GM13977 (cell line): ENCODE measurements at regions of chr6 and their contacts with region 1.

Region 1: DNA sequence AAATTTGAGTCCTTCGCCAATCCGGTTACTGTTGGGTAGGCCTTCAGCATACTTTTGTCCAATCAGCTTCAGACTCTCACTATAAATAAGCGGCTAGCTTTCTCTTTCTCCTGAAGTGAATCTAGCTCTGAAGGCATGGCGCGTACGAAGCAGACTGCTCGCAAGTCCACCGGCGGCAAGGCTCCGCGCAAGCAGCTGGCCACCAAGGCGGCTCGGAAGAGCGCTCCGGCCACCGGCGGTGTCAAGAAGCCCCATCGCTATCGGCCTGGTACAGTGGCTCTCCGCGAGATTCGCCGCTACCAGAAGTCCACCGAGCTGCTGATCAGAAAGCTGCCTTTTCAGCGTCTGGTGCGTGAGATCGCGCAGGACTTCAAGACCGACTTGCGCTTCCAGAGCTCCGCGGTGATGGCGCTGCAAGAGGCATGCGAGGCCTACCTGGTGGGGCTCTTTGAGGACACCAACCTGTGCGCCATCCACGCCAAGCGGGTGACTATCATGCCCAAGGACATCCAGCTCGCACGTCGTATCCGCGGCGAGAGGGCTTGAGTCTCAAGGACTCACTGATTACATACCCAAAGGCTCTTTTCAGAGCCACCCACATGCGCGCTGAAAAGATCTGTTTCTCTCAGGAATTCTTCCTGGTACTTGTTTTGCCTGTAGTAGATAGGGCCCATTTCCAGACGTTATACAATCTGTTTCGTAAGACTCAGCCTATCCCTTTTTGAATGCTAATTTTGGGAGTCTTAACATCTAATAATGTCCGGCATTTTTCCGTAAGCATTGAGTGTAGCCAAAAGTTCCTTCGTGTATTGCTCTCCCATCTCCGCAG is 102.0 kb downstream of the OR2B2 start:
- DNase-seq: peak; percentile 79
- CTCF ChIP-seq: peak; percentile 34

Region 2: GRCh38 chr6:26249957-26250697 is 1560.0 kb before region 1 on chr6:
- in situ Hi-C with region 1: loop called (anchors 25 kb)
- DNase-seq: peak; percentile 55
- CTCF ChIP-seq: peak; percentile 61

Region 3: DNA sequence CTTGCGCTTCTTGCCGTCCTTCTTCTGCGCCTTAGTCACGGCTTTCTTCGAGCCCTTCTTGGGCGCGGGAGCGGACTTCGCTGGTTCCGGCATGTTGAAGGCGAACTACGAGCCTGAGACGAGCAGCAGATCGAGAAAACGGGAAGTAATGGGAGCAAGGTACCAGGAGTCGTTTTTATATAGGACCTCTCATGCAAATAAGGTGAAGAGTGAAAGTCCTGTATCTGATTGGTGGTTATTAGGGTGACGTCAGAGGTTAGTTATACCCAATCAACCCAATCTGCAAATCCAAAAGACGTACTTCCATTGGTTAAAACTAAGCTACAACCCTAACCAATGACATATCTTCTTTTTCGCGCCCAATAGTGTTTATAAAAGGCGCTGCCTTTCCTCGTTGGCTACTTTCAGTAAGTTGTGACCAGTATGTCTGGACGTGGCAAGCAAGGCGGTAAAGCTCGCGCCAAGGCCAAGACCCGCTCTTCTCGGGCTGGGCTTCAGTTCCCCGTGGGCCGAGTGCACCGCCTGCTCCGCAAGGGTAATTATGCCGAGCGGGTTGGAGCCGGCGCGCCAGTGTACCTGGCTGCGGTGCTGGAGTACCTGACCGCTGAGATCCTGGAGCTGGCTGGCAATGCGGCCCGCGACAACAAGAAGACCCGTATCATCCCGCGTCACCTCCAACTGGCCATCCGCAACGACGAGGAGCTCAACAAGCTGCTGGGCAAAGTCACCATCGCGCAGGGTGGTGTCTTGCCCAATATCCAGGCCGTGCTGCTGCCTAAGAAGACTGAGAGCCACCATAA is 663.2 kb before region 1 on chr6:
- in situ Hi-C with region 1: loop called (anchors 5 kb)
- DNase-seq: peak; percentile 93
- CTCF ChIP-seq: no peak

Region 4: GRCh38 chr6:27687154-27688013 is 122.8 kb before region 1 on chr6:
- in situ Hi-C with region 1: no loop called
- DNase-seq: peak; percentile 80
- CTCF ChIP-seq: peak; percentile 95

Region 5: DNA sequence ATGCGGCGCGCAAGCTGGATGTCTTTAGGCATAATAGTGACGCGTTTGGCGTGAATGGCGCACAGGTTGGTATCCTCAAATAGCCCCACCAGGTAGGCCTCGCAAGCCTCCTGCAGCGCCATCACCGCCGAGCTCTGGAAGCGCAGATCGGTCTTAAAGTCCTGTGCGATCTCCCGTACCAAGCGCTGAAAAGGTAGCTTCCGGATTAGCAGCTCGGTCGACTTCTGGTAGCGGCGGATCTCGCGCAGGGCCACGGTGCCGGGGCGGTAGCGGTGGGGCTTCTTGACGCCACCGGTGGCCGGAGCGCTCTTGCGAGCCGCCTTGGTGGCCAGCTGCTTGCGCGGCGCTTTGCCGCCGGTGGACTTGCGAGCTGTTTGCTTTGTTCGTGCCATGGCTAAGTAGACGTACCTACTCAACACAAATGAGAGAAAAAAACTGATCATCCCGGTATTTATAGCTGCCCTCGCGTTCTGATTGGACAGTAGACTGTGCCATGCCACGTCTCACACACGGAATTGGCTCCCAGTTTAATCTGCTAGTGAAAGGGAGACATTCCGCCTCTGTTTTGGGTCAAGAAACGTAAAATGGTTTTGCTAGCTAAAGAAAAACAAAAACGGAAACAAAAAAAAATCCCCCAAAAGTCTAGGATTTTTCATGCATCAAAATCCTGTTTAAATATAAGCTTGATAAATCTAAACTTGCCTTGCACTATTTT is 61.9 kb after region 1 on chr6:
- in situ Hi-C with region 1: no loop called
- DNase-seq: peak; percentile 89
- CTCF ChIP-seq: peak; percentile 64

Region 6: DNA sequence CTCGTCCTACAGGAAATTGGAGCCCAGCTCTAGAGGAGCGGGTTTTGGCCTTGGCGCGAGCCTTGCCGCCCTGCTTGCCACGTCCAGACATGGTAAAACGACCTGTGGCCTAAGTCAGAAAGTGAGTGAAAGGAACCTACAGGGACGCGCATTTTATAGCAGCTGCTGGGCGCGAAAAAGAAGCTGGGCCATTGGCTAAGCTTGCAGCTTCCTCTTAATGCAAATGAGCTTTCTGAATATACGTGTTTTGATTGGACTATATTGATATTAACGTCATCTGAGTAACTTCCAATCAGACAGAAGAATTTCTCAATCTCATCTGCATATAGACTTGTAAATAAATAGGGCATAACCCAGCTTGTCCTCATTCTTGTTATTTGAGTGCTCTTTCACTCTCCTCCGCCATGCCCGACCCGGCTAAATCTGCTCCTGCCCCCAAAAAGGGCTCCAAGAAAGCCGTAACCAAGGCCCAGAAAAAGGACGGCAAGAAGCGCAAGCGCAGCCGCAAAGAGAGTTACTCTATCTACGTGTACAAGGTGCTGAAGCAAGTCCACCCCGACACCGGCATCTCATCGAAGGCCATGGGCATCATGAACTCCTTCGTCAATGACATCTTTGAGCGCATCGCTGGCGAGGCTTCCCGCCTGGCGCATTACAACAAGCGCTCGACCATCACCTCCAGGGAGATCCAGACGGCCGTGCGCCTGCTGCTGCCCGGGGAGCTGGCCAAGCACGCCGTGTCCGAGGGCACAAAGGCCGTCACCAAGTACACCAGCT is 83.1 kb after region 1 on chr6:
- in situ Hi-C with region 1: loop called (anchors 10 kb)
- DNase-seq: peak; percentile 89
- CTCF ChIP-seq: no peak